Tibial artery (tissue), 4 donors: ENCODE measurements at regions of chr5 and their contacts with region 1.

Region 1: DNA sequence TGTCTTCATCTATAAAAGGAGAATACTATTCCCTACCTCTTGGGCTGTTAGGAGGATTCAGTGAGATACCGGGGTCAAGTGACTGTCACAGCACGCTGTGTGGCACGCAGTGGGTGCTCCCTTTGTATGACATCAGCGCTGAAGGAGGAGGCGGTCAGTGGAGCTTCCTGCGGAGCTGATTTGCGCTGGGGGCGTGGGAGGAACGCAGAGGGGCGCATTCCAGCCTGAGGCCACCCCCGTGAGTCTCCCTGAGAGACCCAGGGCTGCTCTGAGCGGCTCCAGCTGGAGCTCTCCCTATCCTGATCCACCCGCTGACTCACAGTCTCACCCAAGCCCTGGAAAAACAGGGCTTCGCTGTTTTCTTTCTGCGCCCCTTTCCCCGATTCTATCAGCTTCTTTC is 24.3 kb upstream of the NEURL1B start:
- DNase-seq: peak in 1 of 2 donors; percentile 58
- H3K4me3 ChIP-seq: no peak overlapping the region
- H3K27ac ChIP-seq: no peak overlapping the region
- H3K4me1 ChIP-seq: peaks cover 0 to 3% (median 0%) of the 10 kb centered on the region in 4 donors
- H3K27me3 ChIP-seq: no peaks in the 10 kb centered on the region
- CTCF ChIP-seq: no peak

Region 2: DNA sequence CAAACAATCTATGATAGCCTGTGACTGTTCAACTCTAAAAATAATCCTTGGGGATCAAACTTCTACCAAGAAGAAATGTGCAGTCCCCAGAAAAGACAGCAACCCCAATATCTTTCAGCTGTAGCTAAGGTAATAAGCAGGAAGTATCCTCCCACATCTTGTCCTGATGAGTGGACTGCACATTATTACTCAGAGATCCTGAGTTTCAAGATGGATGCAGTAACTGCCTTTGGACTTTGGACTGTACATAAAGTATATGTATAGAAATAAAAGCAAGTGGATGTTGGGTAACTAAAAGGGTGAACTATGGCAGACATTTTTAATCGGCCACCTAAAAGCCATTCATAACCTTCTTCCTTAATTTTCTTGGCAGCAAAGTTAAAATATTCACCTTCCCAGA is 786.0 kb before region 1 on chr5:
- intact Hi-C with region 1: loop called (anchors 5 kb)
- DNase-seq: no peak
- H3K4me3 ChIP-seq: no peak overlapping the region
- H3K27ac ChIP-seq: no peak overlapping the region
- H3K4me1 ChIP-seq: no peaks in the 10 kb centered on the region
- H3K27me3 ChIP-seq: no peaks in the 10 kb centered on the region
- CTCF ChIP-seq: no peak

Region 3: DNA sequence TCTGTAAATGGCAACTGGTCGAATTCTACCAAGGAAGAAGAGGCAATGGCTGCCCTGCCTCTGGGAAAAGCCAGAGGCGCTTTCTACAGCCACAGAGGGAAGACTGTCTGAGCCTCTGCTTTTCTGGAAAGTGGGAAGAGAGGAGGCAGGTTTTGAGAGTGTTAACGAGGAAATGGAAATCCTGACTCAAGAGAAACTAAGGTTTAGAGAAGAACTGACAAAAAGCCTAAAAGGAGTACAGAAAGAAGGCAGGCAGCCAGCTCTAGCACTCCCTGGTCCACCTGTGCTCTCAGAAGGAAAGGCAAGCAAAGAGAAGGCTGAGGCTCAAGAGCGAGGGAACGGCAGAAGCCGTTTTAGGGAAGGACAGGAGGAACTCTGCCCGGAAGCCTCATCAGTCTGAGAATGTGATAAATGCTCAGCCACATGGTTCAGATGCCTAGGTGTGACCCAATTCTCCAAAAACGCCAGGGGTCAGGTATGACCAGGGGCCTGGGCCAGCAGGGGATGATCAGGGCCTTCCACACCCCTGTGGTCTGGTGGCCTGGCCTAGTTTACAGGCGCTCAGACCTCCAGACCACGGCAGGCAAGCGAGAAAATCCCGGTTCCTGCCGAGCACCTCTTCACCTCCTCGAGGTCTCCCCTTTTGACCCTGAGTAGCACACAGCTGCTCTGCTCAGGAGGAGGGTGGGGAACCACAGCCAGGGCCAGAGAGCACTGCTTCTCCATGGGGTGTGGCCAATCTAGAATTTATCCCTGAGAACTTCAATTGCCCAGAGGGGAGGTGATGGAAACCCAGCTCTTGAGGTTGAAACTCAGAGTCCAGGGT is 530.3 kb before region 1 on chr5:
- intact Hi-C with region 1: no loop called
- DNase-seq: peak in 1 of 2 donors; percentile 25
- H3K4me3 ChIP-seq: no peak overlapping the region
- H3K27ac ChIP-seq: no peak overlapping the region
- H3K4me1 ChIP-seq: no peaks in the 10 kb centered on the region
- H3K27me3 ChIP-seq: no peaks in the 10 kb centered on the region
- CTCF ChIP-seq: no peak

Region 4: GRCh38 chr5:172958331-172959046 is 341.8 kb after region 1 on chr5:
- intact Hi-C with region 1: no loop called
- DNase-seq: peak; percentile 59 to 77
- H3K4me3 ChIP-seq: peak overlapping the region; percentile 85 to 89
- H3K27ac ChIP-seq: peak overlapping the region; percentile 79 to 89
- H3K4me1 ChIP-seq: peaks cover 0 to 65% (median 24%) of the 10 kb centered on the region in 4 donors
- H3K27me3 ChIP-seq: no peaks in the 10 kb centered on the region
- CTCF ChIP-seq: no peak